Activated naive CD4-positive, alpha-beta T cell treated with anti-CD3 and anti-CD28 coated beads for 36 hours (primary cell): ENCODE measurements at regions of chr3 and their contacts with region 1.

Region 1: GRCh38 chr3:196518966-196519717 is 4.0 kb upstream of the SMCO1 start:
- DNase-seq: peak; percentile 81
- H3K4me3 Mint-ChIP-seq: no peak overlapping the region
- H3K27ac Mint-ChIP-seq: no peak overlapping the region
- H3K4me1 Mint-ChIP-seq: no peaks in the 10 kb centered on the region
- H3K27me3 Mint-ChIP-seq: no peaks in the 10 kb centered on the region

Region 2: GRCh38 chr3:196207833-196208607 is 311.1 kb before region 1 on chr3:
- CTCF ChIA-PET with region 1: no interaction called
- intact Hi-C with region 1: loop called (anchors 5 kb)
- DNase-seq: peak; percentile 80
- H3K4me3 Mint-ChIP-seq: peak overlapping the region; percentile 73
- H3K27ac Mint-ChIP-seq: no peak overlapping the region
- H3K4me1 Mint-ChIP-seq: peaks cover 15% of the 10 kb centered on the region
- H3K27me3 Mint-ChIP-seq: peaks cover 3% of the 10 kb centered on the region

Region 3: DNA sequence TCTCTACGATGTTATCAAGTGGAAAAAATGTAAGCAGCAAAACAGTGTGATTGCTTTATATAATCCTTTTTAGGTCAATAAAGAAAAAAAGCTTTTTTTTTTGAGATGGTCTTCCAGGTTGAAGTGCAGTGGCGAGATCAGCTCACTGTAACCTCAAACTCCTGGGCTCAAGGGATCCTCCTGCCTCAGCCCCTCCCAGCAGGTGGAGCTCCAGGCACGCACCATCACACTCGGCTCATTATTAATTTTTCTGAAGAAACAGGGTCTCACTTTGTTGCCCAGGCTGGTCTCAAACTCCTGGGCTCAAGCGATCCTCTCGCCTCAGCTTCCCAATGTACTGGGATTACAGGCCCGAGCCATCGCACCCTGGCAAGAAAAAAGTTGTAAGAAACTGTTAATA is 32.9 kb before region 1 on chr3:
- CTCF ChIA-PET with region 1: interaction called, 28 read pairs
- intact Hi-C with region 1: loop called (anchors 1 kb)
- DNase-seq: peak; percentile 44
- H3K4me3 Mint-ChIP-seq: no peak overlapping the region
- H3K27ac Mint-ChIP-seq: no peak overlapping the region
- H3K4me1 Mint-ChIP-seq: no peaks in the 10 kb centered on the region
- H3K27me3 Mint-ChIP-seq: no peaks in the 10 kb centered on the region